K562 (cell line): ENCODE measurements at regions of chr6 and their contacts with region 1.

Region 1: GRCh38 chr6:18253635-18254034 is 10.7 kb downstream of the DEK start:
- DNase-seq: no peak
- ATAC-seq: peak; percentile 31; the same call in 2 of the 3 replicates
- H3K4me3 ChIP-seq: no peak overlapping the region
- H3K27ac ChIP-seq: no peak overlapping the region
- H3K4me1 ChIP-seq: no peaks in the 10 kb centered on the region
- H3K27me3 ChIP-seq: no peaks in the 10 kb centered on the region
- CTCF ChIP-seq: no peak
- EP300 ChIP-seq: no peak
- POLR2A ChIP-seq: no peak
- RAD21 ChIP-seq: no peak

Region 2: DNA sequence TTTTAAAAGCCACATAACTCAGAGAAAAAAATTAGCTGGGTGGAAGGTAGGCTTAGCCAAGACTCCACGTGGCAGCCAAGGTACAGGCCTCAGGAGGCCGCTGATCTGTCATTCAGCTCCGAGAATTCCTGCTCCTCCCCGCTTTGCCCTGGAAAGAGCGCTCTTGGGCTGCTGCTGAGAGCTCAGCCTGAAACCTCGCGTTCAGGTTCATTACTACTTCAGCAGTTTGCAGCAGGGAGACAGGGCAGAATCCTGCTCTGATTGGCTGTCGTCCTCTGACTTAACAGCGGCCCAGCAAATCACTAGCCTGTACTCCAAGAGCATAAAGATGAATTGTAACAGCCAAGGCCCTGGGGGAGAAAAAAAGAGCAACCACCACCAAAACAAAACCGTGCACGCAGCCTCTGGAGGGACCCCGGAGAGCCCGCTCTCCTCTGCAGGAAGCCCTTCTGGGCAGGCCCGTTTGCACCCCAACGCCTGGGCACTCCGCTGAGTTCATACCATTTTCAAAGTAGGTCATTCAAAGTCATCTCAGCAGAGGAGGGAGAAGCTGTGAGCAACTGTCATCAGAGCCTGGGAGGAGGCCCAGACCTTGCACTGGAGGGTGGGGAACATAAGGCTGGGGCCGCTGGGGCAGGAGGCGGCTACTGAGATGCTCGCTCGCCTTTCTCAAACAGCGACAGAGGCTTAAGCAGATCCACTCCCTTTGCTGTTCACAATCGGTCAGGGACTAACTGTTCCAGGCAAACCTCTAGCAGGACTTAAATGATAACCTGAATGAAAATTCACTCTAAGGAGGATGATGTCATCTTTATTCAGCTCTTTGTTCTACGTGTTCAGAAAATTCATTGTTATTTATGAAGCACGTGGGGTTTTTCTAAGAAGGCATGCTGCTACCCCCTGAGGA is 1450.1 kb before region 1 on chr6:
- CTCF ChIA-PET with region 1: no interaction called
- POLR2A ChIA-PET with region 1: no interaction called
- in situ Hi-C with region 1: no loop called
- intact Hi-C with region 1: no loop called
- DNase-seq: peak in 2 of 4 experiments; percentile 5 to 22
- ATAC-seq: peak; percentile 46
- H3K4me3 ChIP-seq: no peak overlapping the region
- H3K27ac ChIP-seq: no peak overlapping the region
- H3K4me1 ChIP-seq: no peaks in the 10 kb centered on the region
- H3K27me3 ChIP-seq: peaks cover 10 to 11% of the 10 kb centered on the region in 2 experiments; a peak in 4 of 5 replicates
- CTCF ChIP-seq: no peak
- EP300 ChIP-seq: no peak
- POLR2A ChIP-seq: no peak
- RAD21 ChIP-seq: no peak

Region 3: DNA sequence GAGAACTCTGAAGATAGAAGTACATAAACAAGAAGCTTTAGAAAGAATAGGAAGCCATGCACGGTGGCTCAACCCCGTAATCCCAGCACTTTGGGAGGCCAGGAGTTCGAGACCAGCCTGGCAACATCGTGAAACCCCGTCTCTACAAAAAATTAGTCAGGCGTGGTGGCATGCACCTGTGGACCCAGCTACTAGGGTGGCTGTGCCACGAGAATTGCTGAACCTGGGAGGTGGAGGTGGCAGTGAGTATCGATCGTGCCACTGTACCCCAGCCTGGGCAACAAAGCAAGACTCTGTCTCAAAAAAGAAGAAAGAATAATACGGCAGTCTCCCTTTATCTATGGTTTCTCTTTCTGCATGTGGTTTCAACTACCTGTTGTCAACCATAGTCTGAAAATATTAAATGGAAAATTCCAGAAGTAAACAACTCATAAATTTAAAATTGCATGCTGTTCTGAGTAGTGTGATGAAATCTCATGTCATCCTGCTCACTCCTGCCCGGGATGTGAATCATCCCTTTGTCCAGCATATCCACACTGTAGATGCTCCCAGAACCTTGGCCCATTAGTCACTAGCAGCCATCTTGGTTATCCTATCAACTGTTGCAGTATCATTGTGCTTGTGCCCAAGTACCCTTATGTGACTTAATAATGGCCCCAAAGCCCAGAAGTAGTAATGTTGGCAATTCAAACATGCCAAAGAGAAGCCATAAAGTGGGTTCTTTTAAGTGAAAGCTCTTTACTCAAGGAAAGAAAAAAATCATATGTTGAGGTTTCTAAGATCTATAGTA is 11.4 kb before region 1 on chr6:
- CTCF ChIA-PET with region 1: no interaction called
- POLR2A ChIA-PET with region 1: interaction called, 29 read pairs
- in situ Hi-C with region 1: no loop called
- intact Hi-C with region 1: no loop called
- DNase-seq: peak in 1 of 4 experiments; percentile 38
- ATAC-seq: peak; percentile 68
- H3K4me3 ChIP-seq: no peak overlapping the region
- H3K27ac ChIP-seq: peak overlapping the region; percentile 17; the same call in 1 of the 3 replicates
- H3K4me1 ChIP-seq: peaks cover 0 to 14% of the 10 kb centered on the region in 2 experiments; a peak in 1 of 5 replicates
- H3K27me3 ChIP-seq: no peaks in the 10 kb centered on the region
- CTCF ChIP-seq: no peak
- EP300 ChIP-seq: peak; percentile 68
- POLR2A ChIP-seq: peak; percentile 33
- RAD21 ChIP-seq: no peak

Region 4: GRCh38 chr6:18264219-18264922 is 10.7 kb after region 1 on chr6 and contains the start of gene DEK:
- CTCF ChIA-PET with region 1: no interaction called
- POLR2A ChIA-PET with region 1: interaction called, 14 read pairs
- in situ Hi-C with region 1: no loop called
- intact Hi-C with region 1: no loop called
- DNase-seq: peak; percentile 95 to 97 (median 96)
- ATAC-seq: peak; percentile 89
- H3K4me3 ChIP-seq: peak within 1 kb of the TSS; percentile 92
- H3K27ac ChIP-seq: peak within 1 kb of the TSS; percentile 97
- H3K4me1 ChIP-seq: peaks cover 21 to 36% of the 10 kb centered on the region in 2 experiments
- H3K27me3 ChIP-seq: no peaks in the 10 kb centered on the region
- CTCF ChIP-seq: peak; percentile 63 to 84 (median 76)
- EP300 ChIP-seq: no peak; the same call in 1 of the 2 replicates
- POLR2A ChIP-seq: peak; percentile 66; the same call in 1 of the 2 replicates
- RAD21 ChIP-seq: peak; percentile 60 to 61
- polyA plus RNA-seq, gene DEK: 82.3 to 87.3 TPM